Activated CD8-positive, alpha-beta T cell treated with anti-CD3 and anti-CD28 coated beads, Interleukin-2, amount 10 ng/mL, durations not matched to agents 7 days and 5 days (primary cell): ENCODE measurements at regions of chr15 and their contacts with region 1.

Region 1: DNA sequence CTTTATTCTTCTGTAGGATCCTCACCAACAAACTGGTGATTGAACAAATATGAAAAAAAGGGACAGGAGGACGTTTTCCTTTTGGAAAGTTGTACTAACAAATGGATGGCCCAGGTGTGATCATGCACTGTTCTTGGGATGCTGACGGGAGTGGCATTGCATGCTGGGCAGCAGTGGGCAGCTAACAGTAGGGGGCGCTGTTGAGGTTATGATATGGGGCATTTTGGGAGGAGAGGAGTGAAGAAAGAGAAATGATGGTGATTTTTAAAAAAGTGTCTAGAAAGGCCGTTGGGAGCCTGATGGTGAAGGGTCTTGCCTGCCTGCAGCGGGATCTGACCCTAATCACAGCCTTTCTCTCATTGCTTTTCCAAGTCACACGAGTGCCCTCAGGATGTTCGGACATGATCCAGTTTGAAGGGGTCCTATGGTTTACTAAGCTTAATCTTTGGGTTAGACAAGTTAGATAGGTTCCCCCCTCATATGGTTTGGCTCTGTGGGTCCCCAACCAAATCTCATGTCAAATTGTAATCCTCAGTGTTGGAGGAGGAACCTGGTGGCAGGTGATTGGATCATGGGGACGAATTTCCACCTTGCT is 46.2 kb upstream of the PRTG start:
- DNase-seq: peak; percentile 65
- ATAC-seq: peak; percentile 44
- H3K4me3 Mint-ChIP-seq: no peak overlapping the region
- H3K27ac Mint-ChIP-seq: no peak overlapping the region
- H3K4me1 Mint-ChIP-seq: no peaks in the 10 kb centered on the region
- H3K27me3 Mint-ChIP-seq: peaks cover 2% of the 10 kb centered on the region

Region 2: DNA sequence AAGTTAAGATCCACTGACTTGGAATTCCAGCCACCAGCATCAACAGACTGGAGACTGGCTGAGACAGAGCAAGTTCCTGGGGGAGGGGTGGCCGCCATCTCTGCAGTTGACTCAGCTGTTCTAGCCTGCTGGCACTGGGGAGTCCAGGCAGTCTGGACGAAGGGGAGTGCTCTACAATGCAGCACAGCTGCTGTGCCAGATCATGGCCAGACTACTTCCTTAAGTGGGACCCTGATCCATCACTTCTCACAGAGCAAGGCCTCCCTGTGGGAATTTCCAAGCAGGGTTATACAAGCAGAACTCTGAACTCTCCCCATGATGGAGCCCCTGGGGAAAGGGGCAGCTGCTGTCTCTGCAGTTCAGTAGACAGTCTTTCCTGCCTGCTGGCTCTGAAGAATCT is 236.2 kb before region 1 on chr15:
- CTCF ChIA-PET with region 1: no interaction called
- POLR2A ChIA-PET with region 1: no interaction called
- DNase-seq: no peak
- ATAC-seq: no peak
- H3K4me3 Mint-ChIP-seq: no peak overlapping the region
- H3K27ac Mint-ChIP-seq: no peak overlapping the region
- H3K4me1 Mint-ChIP-seq: no peaks in the 10 kb centered on the region
- H3K27me3 Mint-ChIP-seq: peaks cover 4% of the 10 kb centered on the region

Region 3: DNA sequence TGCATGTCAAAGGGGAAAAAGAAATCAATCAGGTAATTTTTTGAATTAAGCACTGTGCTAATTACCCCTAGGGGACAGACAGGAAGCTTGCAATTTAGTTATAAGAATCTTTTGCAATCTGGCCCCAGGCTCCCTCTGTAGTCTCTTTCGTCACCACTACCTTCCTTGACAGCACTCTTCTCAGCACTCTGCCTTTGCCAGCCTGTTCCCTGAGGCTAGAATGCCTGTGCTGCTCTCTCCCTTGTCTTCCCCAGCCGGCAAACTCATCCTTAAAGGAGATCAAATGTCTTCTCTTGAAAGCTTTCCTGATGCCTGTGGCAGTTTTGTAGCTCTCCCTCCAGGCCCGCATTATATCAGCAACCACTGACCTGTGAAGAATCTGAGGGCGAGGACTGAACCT is 13.8 kb before region 1 on chr15:
- CTCF ChIA-PET with region 1: interaction called, 10 read pairs
- POLR2A ChIA-PET with region 1: no interaction called
- DNase-seq: no peak
- ATAC-seq: no peak
- H3K4me3 Mint-ChIP-seq: no peak overlapping the region
- H3K27ac Mint-ChIP-seq: no peak overlapping the region
- H3K4me1 Mint-ChIP-seq: no peaks in the 10 kb centered on the region
- H3K27me3 Mint-ChIP-seq: peaks cover 12% of the 10 kb centered on the region